Activated CD4-positive, alpha-beta T cell treated with anti-CD3 and anti-CD28 coated beads for 36 hours (primary cell): ENCODE measurements at regions of chr1 and their contacts with region 1.

Region 1: DNA sequence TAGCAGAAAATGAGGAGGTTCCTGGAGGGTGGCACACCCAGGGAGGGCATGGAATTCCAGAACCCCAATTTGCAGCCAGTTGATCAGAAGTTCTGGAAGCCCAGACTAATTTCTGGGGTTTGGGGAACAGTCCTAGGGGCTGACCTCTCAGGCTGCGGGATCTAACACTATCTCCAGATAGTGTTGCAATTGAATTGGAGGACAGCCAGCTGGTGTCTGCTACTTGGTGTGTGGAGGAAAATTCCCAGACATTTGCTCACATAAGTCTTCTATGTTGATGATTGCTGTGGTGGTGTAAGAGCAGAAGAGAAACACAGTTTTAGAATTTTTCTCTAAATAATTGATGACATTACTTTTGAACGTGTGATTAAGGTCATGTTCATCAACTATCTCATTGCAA is 154.3 kb upstream of the RNPC3 start:
- DNase-seq: no peak
- ATAC-seq: no peak
- H3K4me3 Mint-ChIP-seq: no peak overlapping the region
- H3K27ac Mint-ChIP-seq: no peak overlapping the region
- H3K4me1 Mint-ChIP-seq: no peaks in the 10 kb centered on the region
- H3K27me3 Mint-ChIP-seq: peaks cover 2% of the 10 kb centered on the region

Region 2: DNA sequence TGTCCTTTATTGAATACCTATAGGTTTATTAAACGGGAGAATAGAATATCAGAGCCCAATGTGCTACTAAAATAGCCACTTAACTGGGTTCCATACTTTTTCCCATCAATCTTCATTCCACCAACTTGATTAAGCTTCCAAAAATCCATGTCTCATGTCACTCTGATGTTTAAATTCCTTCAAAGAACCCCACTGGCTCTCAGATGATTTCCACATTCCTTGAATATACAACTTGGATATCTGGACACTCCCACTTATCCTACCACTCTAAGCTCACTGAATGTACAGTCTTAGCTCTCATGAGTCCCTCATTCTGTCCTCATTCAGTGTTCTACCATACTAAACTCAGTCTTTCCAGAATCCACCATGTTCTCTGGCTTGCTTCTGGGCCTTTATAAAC is 284.0 kb before region 1 on chr1:
- CTCF ChIA-PET with region 1: no interaction called
- POLR2A ChIA-PET with region 1: no interaction called
- intact Hi-C with region 1: no loop called
- DNase-seq: no peak
- ATAC-seq: no peak
- H3K4me3 Mint-ChIP-seq: no peak overlapping the region
- H3K27ac Mint-ChIP-seq: no peak overlapping the region
- H3K4me1 Mint-ChIP-seq: no peaks in the 10 kb centered on the region
- H3K27me3 Mint-ChIP-seq: no peaks in the 10 kb centered on the region

Region 3: DNA sequence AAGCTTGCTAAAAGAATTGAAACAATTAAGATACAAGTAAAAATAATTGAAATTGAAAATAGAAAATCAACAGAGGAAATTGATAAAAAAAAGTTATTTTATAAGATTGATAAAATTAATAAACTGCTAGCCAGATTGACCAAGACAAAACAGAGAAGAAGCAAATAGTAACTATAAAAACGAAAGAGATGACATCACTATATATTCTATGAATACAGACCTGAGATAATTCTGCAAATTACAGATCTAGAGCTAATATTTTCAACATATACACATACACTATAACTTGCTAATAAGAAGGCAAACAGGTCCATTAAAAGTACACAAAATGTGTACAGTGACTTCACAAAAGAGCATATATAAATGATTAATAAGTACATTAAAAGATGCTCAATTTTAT is 64.2 kb after region 1 on chr1:
- CTCF ChIA-PET with region 1: no interaction called
- POLR2A ChIA-PET with region 1: no interaction called
- intact Hi-C with region 1: loop called in 1 of 2 experiments (anchors 10 kb)
- DNase-seq: no peak
- ATAC-seq: no peak
- H3K4me3 Mint-ChIP-seq: no peak overlapping the region
- H3K27ac Mint-ChIP-seq: no peak overlapping the region
- H3K4me1 Mint-ChIP-seq: no peaks in the 10 kb centered on the region
- H3K27me3 Mint-ChIP-seq: no peaks in the 10 kb centered on the region

Region 4: DNA sequence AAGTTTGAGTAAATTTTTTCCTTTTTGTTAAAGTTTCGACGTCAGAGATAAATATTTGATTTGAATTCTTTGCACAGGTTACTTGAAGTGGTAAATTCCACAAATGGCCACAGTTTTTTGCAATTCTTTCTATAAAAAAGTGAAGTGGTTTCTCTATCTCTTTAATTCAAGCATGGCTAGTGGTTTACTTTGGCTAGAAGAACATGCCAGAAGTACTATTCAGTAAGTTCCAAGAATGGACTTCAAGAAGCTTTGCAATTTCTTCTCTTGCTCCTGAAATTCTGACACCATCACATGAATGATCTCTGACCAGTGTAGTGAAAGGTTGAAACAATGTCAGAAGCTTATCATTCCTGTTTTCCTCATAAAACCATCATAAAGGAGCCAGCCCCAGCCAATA is 98.6 kb after region 1 on chr1:
- CTCF ChIA-PET with region 1: no interaction called
- POLR2A ChIA-PET with region 1: no interaction called
- intact Hi-C with region 1: no loop called
- DNase-seq: no peak
- ATAC-seq: no peak
- H3K4me3 Mint-ChIP-seq: no peak overlapping the region
- H3K27ac Mint-ChIP-seq: no peak overlapping the region
- H3K4me1 Mint-ChIP-seq: no peaks in the 10 kb centered on the region
- H3K27me3 Mint-ChIP-seq: peaks cover 9% of the 10 kb centered on the region